ENCODE measurements at regions of chr7 and their contacts with region 1.

Region 1: DNA sequence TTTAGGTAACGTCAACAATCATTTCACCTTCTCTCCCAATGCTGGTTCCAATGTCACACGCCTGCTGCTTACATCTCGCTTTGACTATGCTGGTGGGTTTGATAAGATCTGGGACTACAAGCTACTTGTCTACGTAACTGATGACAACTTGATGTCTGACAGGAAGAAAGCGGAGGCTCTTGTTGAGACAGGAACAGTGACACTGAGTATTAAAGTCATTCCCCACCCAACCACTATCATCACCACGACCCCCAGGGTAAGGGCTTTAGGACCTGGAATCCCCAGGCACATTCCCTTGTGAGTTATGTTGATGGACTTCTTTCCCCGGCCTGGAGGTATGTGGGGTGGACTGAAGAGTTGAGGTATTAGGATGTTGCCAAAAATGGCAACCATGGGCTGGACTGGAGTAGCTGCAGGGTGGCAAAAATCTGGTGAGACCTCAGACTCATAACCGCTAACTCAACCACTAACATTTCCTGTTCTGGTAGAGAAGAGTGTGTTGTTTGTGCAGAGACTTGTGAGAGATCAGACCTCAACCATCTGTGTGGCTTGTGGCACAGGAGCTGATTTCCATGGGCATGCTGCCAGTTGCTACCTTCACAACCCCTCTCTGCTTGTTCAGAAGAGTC is 59.2 kb downstream of the CDHR3 start:
- DNase-seq: peak; percentile 84
- ATAC-seq: peak; percentile 86
- H3K4me3 Mint-ChIP-seq: peak overlapping the region; percentile 22
- H3K27ac Mint-ChIP-seq: peak overlapping the region; percentile 77
- H3K4me1 Mint-ChIP-seq: peaks cover 56% of the 10 kb centered on the region
- H3K27me3 Mint-ChIP-seq: no peaks in the 10 kb centered on the region
- CTCF ChIP-seq: no peak

Region 2: GRCh38 chr7:105866102-105866801 is 156.1 kb before region 1 on chr7:
- CTCF ChIA-PET with region 1: no interaction called
- POLR2A ChIA-PET with region 1: no interaction called
- intact Hi-C with region 1: no loop called
- DNase-seq: no peak
- ATAC-seq: no peak
- H3K4me3 Mint-ChIP-seq: no peak overlapping the region
- H3K27ac Mint-ChIP-seq: no peak overlapping the region
- H3K4me1 Mint-ChIP-seq: no peaks in the 10 kb centered on the region
- H3K27me3 Mint-ChIP-seq: no peaks in the 10 kb centered on the region
- CTCF ChIP-seq: no peak

Region 3: GRCh38 chr7:105924945-105925344 is 97.4 kb before region 1 on chr7:
- CTCF ChIA-PET with region 1: no interaction called
- POLR2A ChIA-PET with region 1: no interaction called
- intact Hi-C with region 1: loop called (anchors 5 kb)
- DNase-seq: peak; percentile 67
- ATAC-seq: peak; percentile 90
- H3K4me3 Mint-ChIP-seq: no peak overlapping the region
- H3K27ac Mint-ChIP-seq: peak overlapping the region; percentile 58
- H3K4me1 Mint-ChIP-seq: peaks cover 33% of the 10 kb centered on the region
- H3K27me3 Mint-ChIP-seq: peaks cover 4% of the 10 kb centered on the region
- CTCF ChIP-seq: no peak

Region 4: DNA sequence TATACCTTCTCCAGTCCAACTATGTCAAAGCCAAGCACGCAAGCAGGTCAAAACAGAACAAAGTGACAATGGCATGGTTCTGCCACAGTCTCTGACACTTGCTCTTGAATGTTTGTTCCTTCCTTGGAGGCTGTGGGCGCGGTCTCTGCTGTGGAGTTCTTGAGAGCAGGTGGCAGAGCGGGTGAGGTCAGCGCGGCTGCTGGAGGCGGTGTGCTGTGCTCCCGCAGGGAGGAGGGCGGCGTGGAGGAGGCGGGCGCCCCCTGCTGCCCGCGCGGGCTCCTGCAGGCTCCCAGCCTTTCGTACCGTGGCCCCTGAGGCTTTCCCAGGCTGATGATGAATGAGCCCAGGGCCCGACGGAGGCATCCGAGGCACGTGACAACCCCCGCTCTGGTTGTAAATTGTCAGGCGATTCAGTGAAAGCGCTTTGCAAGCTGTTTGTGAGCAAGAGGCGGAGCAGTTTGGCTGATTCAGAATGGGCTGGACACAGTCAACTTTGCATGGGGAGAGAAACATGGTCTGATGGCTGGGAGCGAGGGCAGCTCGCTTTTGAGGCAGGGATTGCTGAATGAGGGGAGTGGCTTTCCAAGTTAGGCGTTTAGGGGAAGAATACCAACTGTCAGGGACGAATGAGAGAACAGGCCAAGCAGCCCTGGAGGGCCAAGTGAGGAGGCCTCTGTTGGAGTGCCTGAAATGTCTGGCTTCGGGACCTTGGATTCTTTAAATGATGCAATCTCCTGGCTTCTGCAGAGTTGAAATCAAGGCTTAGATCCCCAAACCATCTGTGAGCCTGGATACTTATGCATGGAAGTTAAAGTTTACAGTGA is 12.7 kb before region 1 on chr7:
- CTCF ChIA-PET with region 1: interaction called, 14 read pairs
- POLR2A ChIA-PET with region 1: interaction called, 6 read pairs
- intact Hi-C with region 1: no loop called
- DNase-seq: peak; percentile 86
- ATAC-seq: peak; percentile 99
- H3K4me3 Mint-ChIP-seq: no peak overlapping the region
- H3K27ac Mint-ChIP-seq: no peak overlapping the region
- H3K4me1 Mint-ChIP-seq: peaks cover 25% of the 10 kb centered on the region
- H3K27me3 Mint-ChIP-seq: peaks cover 2% of the 10 kb centered on the region
- CTCF ChIP-seq: peak; percentile 99

Region 5: DNA sequence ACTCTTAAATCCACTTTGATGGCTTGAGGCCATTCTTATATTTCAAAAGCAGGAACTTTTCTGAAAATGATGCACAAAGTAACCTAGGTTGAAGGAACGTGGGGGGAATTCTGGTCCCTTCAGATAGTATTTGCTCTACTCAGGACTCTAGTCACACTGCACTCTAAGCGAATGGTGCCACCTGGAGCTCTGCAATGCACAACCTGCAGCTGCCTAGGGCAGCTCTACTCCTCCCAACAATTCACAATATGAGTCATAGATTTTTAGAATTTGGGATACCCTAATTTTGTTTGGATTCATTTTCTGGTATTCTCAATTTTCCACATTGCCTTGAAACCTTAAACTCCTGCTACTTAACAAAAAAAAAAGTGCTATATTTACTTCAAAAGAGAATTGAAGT is 72.5 kb after region 1 on chr7:
- CTCF ChIA-PET with region 1: no interaction called
- POLR2A ChIA-PET with region 1: no interaction called
- intact Hi-C with region 1: no loop called
- DNase-seq: no peak
- ATAC-seq: no peak
- H3K4me3 Mint-ChIP-seq: no peak overlapping the region
- H3K27ac Mint-ChIP-seq: no peak overlapping the region
- H3K4me1 Mint-ChIP-seq: peaks cover 19% of the 10 kb centered on the region
- H3K27me3 Mint-ChIP-seq: no peaks in the 10 kb centered on the region
- CTCF ChIP-seq: no peak

Region 6: DNA sequence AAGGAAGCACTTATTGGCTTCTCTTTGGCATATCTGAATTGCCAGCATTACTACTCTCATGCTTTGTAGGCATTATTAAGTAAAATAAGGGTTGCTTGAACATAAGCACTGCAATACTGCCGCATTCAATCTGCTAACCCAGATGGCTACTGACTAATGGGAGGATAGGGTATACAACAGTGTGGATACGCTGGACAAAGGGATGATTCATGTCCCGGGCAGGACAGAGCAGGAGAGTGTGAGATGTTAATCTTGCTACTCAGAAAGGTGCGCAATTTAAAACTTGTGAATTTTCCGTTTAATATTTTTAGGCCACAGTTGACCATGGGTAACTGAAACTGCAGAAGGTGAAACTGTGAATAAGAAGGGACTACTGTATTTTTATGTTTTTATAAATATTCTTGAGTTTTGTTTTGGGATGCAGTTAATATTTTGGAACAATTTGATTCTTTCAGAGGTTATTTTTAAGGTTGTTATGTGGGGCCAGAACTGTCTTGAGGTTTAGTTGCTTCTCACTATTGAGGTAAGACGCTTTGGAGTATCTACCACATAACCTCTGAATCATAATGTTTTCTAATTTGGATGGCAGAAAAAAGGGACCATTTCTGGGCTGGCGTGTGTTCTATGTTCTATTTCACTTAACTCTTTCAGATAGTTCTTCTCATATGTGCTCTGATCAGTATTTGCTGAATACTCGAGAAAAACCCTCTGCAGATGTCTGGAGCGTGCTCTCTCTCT is 165.5 kb after region 1 on chr7:
- CTCF ChIA-PET with region 1: no interaction called
- POLR2A ChIA-PET with region 1: no interaction called
- intact Hi-C with region 1: no loop called
- DNase-seq: no peak
- ATAC-seq: no peak
- H3K4me3 Mint-ChIP-seq: no peak overlapping the region
- H3K27ac Mint-ChIP-seq: no peak overlapping the region
- H3K4me1 Mint-ChIP-seq: peaks cover 9% of the 10 kb centered on the region
- H3K27me3 Mint-ChIP-seq: peaks cover 8% of the 10 kb centered on the region
- CTCF ChIP-seq: no peak